Colonic mucosa (tissue), 4 donors: ENCODE measurements at regions of chr14 and their contacts with region 1.

Region 1: GRCh38 chr14:52272375-52272774 is 4.9 kb downstream of the PTGDR start:
- DNase-seq: peak; percentile 66
- H3K4me3 ChIP-seq: no peak overlapping the region
- H3K27ac ChIP-seq: no peak overlapping the region
- H3K4me1 ChIP-seq: no peaks in the 10 kb centered on the region
- H3K27me3 ChIP-seq: peaks cover 8% of the 10 kb centered on the region
- CTCF ChIP-seq: peak; percentile 19

Region 2: DNA sequence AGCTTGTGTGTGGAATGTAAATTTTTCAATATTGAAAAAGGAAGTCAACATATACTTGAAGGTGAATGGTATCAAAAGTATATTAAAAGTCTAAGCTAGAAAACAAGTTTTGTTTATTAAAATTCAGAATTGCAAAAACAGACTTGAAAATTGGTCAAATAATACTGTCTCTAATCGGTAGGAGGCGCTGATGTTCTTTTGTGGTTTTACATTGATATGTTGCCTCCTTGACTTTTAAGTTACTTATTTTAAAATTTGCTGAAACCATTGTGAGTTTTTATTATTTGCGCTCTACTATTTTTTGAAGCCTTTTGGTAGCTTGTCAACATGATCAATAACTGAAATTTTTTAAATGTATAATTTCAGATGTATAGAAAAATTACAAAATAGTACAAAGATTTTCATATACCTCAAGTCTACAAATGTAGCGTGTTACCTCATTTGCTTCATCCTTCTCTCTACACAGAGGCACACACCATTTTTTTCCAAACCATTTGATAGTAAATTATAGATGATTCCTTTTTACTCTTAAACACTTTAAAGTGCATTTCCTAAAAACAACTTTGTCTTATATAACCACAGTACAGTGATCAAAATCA is 276.1 kb before region 1 on chr14:
- intact Hi-C with region 1: loop called (anchors 5 kb)
- DNase-seq: no peak
- H3K4me3 ChIP-seq: no peak overlapping the region
- H3K27ac ChIP-seq: no peak overlapping the region
- H3K4me1 ChIP-seq: peaks cover 3% of the 10 kb centered on the region
- H3K27me3 ChIP-seq: no peaks in the 10 kb centered on the region
- CTCF ChIP-seq: peak; percentile 68

Region 3: GRCh38 chr14:52146504-52146903 is 125.9 kb before region 1 on chr14:
- intact Hi-C with region 1: loop called (anchors 10 kb)
- DNase-seq: no peak
- H3K4me3 ChIP-seq: no peak overlapping the region
- H3K27ac ChIP-seq: no peak overlapping the region
- H3K4me1 ChIP-seq: no peaks in the 10 kb centered on the region
- H3K27me3 ChIP-seq: no peaks in the 10 kb centered on the region
- CTCF ChIP-seq: no peak